Head of caudate nucleus (tissue), 42 donors: ENCODE measurements at regions of chr20 and their contacts with region 1.

Region 1: GRCh38 chr20:17873410-17874270 is 95.0 kb downstream of the SNX5 start:
- DNase-seq: peak in 11 of 42 donors; percentile 17 to 49 (median 31)

Region 2: DNA sequence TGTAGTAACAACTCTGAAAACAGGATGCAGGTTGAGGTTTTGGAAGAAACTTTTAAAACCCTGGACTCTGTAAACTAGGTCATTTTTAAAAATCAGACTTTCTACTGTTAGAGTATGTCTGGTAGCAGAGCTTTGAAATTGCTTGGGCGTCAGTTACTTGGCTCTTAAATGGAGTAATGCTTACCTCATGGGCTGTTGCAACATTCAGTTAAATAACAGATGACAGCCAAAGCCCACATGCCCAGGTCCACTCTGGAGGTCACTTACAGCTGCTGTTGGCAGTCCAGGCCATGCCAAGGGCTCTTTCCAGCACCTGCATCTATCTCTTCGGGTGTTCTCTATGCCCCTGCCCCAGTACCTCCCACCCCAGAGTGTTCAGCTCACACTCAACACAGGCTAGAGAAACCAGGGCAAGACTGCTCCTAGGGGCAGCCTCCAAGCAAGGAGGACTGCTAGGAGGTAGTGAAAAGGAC is 77.5 kb before region 1 on chr20:
- intact Hi-C with region 1: loop called (anchors 10 kb)
- DNase-seq: no peak